Aorta (tissue), 5 donors: ENCODE measurements at regions of chr21 and their contacts with region 1.

Region 1: GRCh38 chr21:44873356-44874239 is at the start of gene PTTG1IP:
- DNase-seq: peak; percentile 99 to 100
- ATAC-seq: peak; percentile 91
- H3K4me3 ChIP-seq: peak within 1 kb of the TSS; percentile 88 to 89
- H3K27ac ChIP-seq: peak within 1 kb of the TSS; percentile 95 to 98
- H3K4me1 ChIP-seq: peaks cover 0 to 4% of the 10 kb centered on the region in 2 donors
- H3K27me3 ChIP-seq: no peaks in the 10 kb centered on the region
- total RNA-seq, gene PTTG1IP: 268 to 271 TPM

Region 2: GRCh38 chr21:44752634-44753291 is 120.8 kb before region 1 on chr21:
- intact Hi-C with region 1: no loop called
- DNase-seq: peak in 1 of 2 donors; percentile 37
- ATAC-seq: no peak
- H3K4me3 ChIP-seq: no peak overlapping the region
- H3K27ac ChIP-seq: no peak overlapping the region
- H3K4me1 ChIP-seq: no peaks in the 10 kb centered on the region
- H3K27me3 ChIP-seq: no peaks in the 10 kb centered on the region

Region 3: DNA sequence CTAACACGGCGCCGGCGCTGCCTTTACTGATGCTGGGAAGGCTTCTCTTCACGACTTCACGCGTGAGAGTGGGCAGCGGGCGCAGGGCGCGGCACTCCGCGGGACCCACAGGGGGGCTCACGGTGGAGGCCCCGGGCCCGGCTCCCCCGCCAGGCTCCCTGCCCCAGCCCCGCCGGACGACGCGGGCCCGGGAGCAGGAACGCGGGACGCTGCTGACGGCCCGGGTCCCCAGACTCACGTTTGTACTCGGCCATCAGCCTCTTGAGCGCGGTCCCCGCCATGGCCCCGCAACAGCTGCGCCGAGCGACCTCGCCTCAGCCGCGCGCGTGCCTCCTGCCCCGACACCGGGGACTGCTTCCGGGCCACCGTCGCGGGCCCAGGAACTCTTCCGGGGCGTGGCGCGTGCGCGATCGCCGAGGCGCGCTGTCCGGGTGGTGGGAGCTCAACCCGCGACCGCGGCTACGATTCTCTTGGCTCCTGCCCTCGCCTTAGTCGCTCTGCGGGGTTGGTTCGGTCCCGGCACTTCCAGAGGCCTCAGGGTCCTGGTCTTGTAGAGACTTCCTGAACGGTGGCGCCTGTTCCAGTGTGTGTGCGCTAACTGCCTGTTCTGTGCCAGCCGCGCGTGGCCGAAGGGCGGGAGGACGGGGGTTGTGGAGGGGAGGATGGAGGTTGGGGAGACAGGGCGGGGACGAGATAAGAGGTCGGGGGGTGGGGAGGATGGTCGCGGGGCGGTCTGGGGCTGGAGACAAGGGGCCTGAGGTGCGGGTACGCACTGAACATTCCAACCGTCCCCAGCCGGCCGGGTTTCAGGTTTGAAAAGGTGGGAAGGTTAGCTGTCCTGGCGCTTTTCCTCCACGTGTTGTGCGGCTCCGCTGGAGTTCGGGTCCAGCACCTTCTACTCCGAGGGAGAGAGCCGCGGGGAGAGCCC is 71.9 kb before region 1 on chr21 and contains the start of gene UBE2G2:
- intact Hi-C with region 1: loop called (anchors 5 kb)
- DNase-seq: peak; percentile 85 to 95
- ATAC-seq: peak; percentile 94
- H3K4me3 ChIP-seq: peak within 1 kb of the TSS; percentile 80 to 99
- H3K27ac ChIP-seq: peak within 1 kb of the TSS in 1 of 2 donors; percentile 37
- H3K4me1 ChIP-seq: no peaks in the 10 kb centered on the region
- H3K27me3 ChIP-seq: no peaks in the 10 kb centered on the region
- total RNA-seq, gene UBE2G2: 79.5 to 83.6 TPM

Region 4: DNA sequence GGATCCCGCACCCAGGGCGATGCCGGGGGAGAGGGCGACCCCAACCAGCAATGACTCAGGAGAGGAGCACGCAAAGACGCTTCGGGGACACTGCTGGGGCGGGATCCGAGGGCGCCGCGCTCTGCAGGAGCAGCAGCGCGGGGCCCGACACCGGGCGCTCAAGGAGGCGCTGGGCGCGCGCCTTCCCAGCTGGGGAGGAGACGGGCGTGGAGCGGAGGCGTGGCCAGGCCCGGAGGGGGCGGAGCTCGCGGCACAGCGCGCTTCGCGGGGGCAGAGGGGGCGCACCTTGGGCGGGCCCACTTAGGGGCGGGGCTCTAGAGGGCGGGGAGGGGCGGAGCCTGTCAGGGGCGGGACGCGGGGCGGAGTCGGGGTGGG is 56.1 kb before region 1 on chr21:
- intact Hi-C with region 1: loop called (anchors 5 kb)
- DNase-seq: peak; percentile 95 to 98
- ATAC-seq: peak; percentile 95
- H3K4me3 ChIP-seq: peak overlapping the region; percentile 51 to 67
- H3K27ac ChIP-seq: no peak overlapping the region
- H3K4me1 ChIP-seq: no peaks in the 10 kb centered on the region
- H3K27me3 ChIP-seq: no peaks in the 10 kb centered on the region

Region 5: DNA sequence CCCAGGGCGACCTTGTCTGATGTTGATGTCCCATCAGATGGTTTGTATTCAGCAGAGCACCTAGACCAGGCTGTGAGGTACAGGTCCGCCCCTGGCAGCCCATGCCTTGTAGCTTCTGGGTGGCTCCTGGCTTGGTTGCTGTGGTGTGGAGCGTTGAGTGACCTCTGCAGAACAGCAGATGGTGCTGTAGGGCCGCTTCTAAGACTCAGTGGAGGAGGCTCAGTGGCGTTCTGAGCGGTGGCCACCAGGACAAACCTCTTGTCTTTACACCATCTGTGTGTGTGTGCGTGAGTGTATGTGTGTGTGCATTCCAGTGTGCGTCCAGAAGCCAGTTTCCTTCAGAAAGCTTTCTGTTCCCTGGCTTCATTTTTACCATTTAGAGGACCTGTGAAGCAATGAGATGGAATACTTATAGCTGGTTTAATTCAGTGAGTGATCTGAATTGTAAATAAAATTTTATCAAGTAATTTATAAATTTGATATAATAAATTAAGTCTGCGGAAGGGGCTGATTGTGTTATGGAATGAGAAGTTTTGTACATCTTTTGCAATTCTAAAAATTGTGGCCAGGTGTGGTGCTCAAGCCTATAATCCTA is 266.8 kb after region 1 on chr21:
- intact Hi-C with region 1: loop called (anchors 10 kb)
- DNase-seq: peak; percentile 88
- ATAC-seq: peak; percentile 83
- H3K4me3 ChIP-seq: no peak overlapping the region
- H3K27ac ChIP-seq: no peak overlapping the region
- H3K4me1 ChIP-seq: peaks cover 0 to 2% of the 10 kb centered on the region in 2 donors
- H3K27me3 ChIP-seq: no peaks in the 10 kb centered on the region